ENCODE measurements at regions of chr10 and their contacts with region 1.

Region 1: GRCh38 chr10:112721080-112721698 is 228.9 kb upstream of the TCF7L2 start:
- DNase-seq: no peak
- ATAC-seq: no peak
- H3K4me3 Mint-ChIP-seq: no peak overlapping the region
- H3K27ac Mint-ChIP-seq: no peak overlapping the region
- H3K4me1 Mint-ChIP-seq: no peaks in the 10 kb centered on the region
- H3K27me3 Mint-ChIP-seq: no peaks in the 10 kb centered on the region
- CTCF ChIP-seq: no peak

Region 2: DNA sequence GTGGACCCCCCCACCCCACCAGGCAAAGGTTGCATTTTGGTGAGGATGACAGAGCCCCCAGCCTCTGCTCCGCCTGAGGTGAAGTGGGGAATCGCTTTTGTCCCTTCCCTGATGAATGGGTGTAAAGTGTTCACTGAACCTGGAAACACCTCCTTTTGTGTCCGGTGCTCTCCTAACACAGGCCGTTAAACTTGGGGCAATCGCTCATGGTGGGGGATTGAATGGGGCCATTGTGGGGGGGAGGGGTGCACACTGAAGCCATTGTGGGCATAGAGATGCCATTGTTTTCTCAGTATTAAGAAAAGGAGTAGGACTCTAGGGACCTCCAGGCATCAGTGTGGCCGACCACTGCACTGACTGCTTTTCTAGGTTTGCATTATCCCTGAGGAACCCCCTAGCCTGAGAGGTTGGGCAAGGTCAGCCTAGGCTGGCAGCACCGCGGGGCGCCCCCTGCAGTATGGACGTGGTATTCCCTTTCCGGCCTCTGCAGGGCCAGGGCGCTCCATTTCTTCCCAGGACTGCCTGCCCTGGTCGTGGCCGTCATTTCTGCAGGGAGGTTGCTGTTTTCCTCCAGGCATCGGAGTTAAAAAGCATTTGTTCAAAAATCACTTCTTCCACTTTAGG is 387.1 kb after region 1 on chr10:
- CTCF ChIA-PET with region 1: no interaction called
- POLR2A ChIA-PET with region 1: no interaction called
- intact Hi-C with region 1: loop called (anchors 1 kb)
- DNase-seq: no peak
- ATAC-seq: no peak
- H3K4me3 Mint-ChIP-seq: no peak overlapping the region
- H3K27ac Mint-ChIP-seq: no peak overlapping the region
- H3K4me1 Mint-ChIP-seq: no peaks in the 10 kb centered on the region
- H3K27me3 Mint-ChIP-seq: peaks cover 20% of the 10 kb centered on the region
- CTCF ChIP-seq: no peak

Region 3: DNA sequence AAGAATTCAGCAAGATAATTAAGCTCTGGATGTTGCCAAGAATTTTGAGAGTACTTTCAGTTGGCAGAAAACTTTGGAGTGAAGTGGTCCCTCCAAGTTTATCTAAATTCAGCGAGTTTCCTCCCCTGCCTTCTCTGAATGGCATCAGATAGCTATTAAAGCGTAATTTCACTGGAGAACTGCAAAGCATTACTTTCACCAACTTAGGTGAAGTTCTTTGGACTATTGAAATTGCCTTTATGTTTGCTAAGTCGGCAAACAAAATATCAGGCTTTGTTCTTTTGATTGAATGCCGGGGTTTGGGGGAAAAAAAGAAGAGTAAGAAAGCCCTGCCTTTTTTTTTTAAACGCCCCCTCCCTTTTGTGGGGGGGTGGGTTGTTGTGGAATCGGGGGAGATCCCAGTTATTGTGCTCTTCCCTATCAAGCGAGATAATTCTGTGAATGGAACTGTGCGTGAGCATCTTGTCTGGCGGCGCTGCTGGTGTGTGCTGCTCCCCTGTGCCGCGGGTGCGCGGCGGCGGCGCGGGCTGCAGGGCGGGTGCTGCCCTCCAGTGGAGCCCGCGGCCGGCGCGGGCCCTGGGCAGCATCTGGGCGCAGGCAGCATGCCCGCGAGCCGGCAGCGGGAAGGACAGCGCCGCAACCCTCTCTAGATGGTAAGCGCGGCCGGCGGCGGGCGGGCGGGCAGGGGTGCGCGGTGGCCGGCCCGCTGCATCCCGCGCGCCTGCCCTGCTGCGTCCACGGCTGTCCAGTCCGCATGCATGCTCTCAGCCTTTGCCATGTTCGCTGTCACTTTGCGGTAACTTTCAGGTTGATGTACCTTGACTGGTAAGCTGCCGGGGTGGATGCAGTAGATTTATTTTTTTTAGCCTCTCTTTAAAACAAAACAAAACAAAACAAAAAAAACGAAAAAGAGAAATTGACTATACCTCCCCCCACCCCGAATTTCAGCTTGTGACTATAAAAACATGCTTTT is 405.3 kb after region 1 on chr10:
- CTCF ChIA-PET with region 1: interaction called, 3 read pairs
- POLR2A ChIA-PET with region 1: no interaction called
- intact Hi-C with region 1: loop called (anchors 1 kb)
- DNase-seq: peak; percentile 22
- ATAC-seq: peak; percentile 71
- H3K4me3 Mint-ChIP-seq: peak overlapping the region; percentile 25
- H3K27ac Mint-ChIP-seq: no peak overlapping the region
- H3K4me1 Mint-ChIP-seq: peaks cover 3% of the 10 kb centered on the region
- H3K27me3 Mint-ChIP-seq: peaks cover 42% of the 10 kb centered on the region
- CTCF ChIP-seq: no peak

Region 4: GRCh38 chr10:113385021-113385999 is 664.1 kb after region 1 on chr10:
- CTCF ChIA-PET with region 1: interaction called, 12 read pairs
- POLR2A ChIA-PET with region 1: no interaction called
- intact Hi-C with region 1: loop called (anchors 1 kb)
- DNase-seq: no peak
- ATAC-seq: peak; percentile 77
- H3K4me3 Mint-ChIP-seq: no peak overlapping the region
- H3K27ac Mint-ChIP-seq: no peak overlapping the region
- H3K4me1 Mint-ChIP-seq: peaks cover 15% of the 10 kb centered on the region
- H3K27me3 Mint-ChIP-seq: peaks cover 22% of the 10 kb centered on the region
- CTCF ChIP-seq: no peak

Region 5: GRCh38 chr10:113563306-113564088 is 842.3 kb after region 1 on chr10:
- CTCF ChIA-PET with region 1: no interaction called
- POLR2A ChIA-PET with region 1: no interaction called
- intact Hi-C with region 1: loop called (anchors 5 kb)
- DNase-seq: peak; percentile 50
- ATAC-seq: peak; percentile 77
- H3K4me3 Mint-ChIP-seq: peak overlapping the region; percentile 70
- H3K27ac Mint-ChIP-seq: no peak overlapping the region
- H3K4me1 Mint-ChIP-seq: peaks cover 5% of the 10 kb centered on the region
- H3K27me3 Mint-ChIP-seq: peaks cover 5% of the 10 kb centered on the region
- CTCF ChIP-seq: peak; percentile 56

Measured in activated B cell treated with CpG ODN at 0.5 μM for 24 hours (primary cell).